ENCODE measurements at regions of chr1 and their contacts with region 1.

Region 1: GRCh38 chr1:155172732-155173477 is at the start of gene KRTCAP2:
- DNase-seq: peak; percentile 97
- ATAC-seq: peak; percentile 64
- H3K4me3 Mint-ChIP-seq: peak within 1 kb of the TSS; percentile 94
- H3K27ac Mint-ChIP-seq: peak within 1 kb of the TSS; percentile 95
- H3K4me1 Mint-ChIP-seq: peaks cover 29% of the 10 kb centered on the region
- H3K27me3 Mint-ChIP-seq: no peaks in the 10 kb centered on the region
- CTCF ChIP-seq: peak; percentile 88
- total RNA-seq, gene KRTCAP2: 104 to 161 TPM (median 147 TPM) in 3 replicates

Region 2: GRCh38 chr1:155050560-155051341 is 122.2 kb before region 1 on chr1 and contains the start of gene ADAM15:
- CTCF ChIA-PET with region 1: interaction called, 29 read pairs
- POLR2A ChIA-PET with region 1: no interaction called
- DNase-seq: peak; percentile 92
- ATAC-seq: peak; percentile 72
- H3K4me3 Mint-ChIP-seq: peak within 1 kb of the TSS; percentile 82
- H3K27ac Mint-ChIP-seq: peak within 1 kb of the TSS; percentile 72; the same call in 1 of the 2 replicates
- H3K4me1 Mint-ChIP-seq: peaks cover 33% of the 10 kb centered on the region
- H3K27me3 Mint-ChIP-seq: peaks cover 20% of the 10 kb centered on the region
- CTCF ChIP-seq: peak; percentile 97
- total RNA-seq, gene ADAM15: 32.1 to 38.4 TPM (median 33.2 TPM) in 3 replicates

Region 3: DNA sequence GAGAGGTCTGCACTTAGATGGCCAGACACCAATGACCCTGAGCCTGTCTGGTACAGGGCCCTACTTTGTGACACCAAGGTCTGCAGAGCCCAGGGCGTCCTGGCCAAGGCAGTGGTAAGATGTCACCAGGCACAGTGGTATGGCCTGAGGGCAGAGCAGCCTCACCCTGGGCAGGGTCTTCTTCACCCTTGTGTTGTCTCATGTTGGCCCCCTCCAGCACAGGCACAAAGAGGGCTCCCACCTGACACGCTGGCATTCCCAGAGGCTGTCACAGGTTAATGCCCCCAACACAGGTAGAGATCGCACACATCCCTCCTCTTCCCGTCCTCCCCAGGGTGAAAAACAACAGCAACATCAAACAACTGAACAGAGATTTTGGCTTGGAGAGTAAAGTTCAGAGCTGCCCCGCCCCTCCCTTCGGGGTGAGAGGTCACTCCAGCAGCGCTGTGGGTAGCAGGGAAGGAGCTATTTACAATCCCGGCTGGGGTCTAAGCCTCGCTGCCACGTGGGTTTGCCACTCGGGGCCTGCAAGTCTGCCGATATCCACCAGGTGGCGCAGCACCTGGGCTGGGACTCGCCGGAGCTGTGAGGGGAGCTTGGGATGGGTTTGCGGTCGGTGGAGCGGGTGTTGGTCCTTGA is 81.7 kb before region 1 on chr1:
- CTCF ChIA-PET with region 1: interaction called, 605 read pairs
- POLR2A ChIA-PET with region 1: interaction called, 8 read pairs
- DNase-seq: peak; percentile 94
- ATAC-seq: peak; percentile 80
- H3K4me3 Mint-ChIP-seq: peak overlapping the region; percentile 32
- H3K27ac Mint-ChIP-seq: no peak overlapping the region
- H3K4me1 Mint-ChIP-seq: peaks cover 30% of the 10 kb centered on the region
- H3K27me3 Mint-ChIP-seq: peaks cover 12% of the 10 kb centered on the region
- CTCF ChIP-seq: peak; percentile 99

Region 4: GRCh38 chr1:155145491-155145890 is 27.4 kb before region 1 on chr1:
- CTCF ChIA-PET with region 1: interaction called, 43 read pairs
- POLR2A ChIA-PET with region 1: interaction called, 6 read pairs
- DNase-seq: no peak
- ATAC-seq: no peak
- H3K4me3 Mint-ChIP-seq: no peak overlapping the region
- H3K27ac Mint-ChIP-seq: no peak overlapping the region
- H3K4me1 Mint-ChIP-seq: peaks cover 6% of the 10 kb centered on the region; the same call in 1 of the 2 replicates
- H3K27me3 Mint-ChIP-seq: peaks cover 36% of the 10 kb centered on the region
- CTCF ChIP-seq: no peak

Region 5: GRCh38 chr1:155208541-155209311 is 35.8 kb after region 1 on chr1 and contains the start of gene MTX1:
- CTCF ChIA-PET with region 1: interaction called, 51 read pairs
- POLR2A ChIA-PET with region 1: interaction called, 3 read pairs
- DNase-seq: peak; percentile 88
- ATAC-seq: peak; percentile 65
- H3K4me3 Mint-ChIP-seq: peak within 1 kb of the TSS; percentile 88
- H3K27ac Mint-ChIP-seq: peak within 1 kb of the TSS; percentile 89
- H3K4me1 Mint-ChIP-seq: peaks cover 19% of the 10 kb centered on the region
- H3K27me3 Mint-ChIP-seq: peaks cover 7% of the 10 kb centered on the region; the same call in 1 of the 2 replicates
- CTCF ChIP-seq: no peak
- total RNA-seq, gene MTX1: 57.5 to 62.8 TPM (median 60.4 TPM) in 3 replicates

Region 6: GRCh38 chr1:155334962-155335361 is 162.1 kb after region 1 on chr1:
- CTCF ChIA-PET with region 1: no interaction called
- POLR2A ChIA-PET with region 1: no interaction called
- DNase-seq: no peak
- ATAC-seq: no peak
- H3K4me3 Mint-ChIP-seq: no peak overlapping the region
- H3K27ac Mint-ChIP-seq: peak overlapping the region; percentile 57; the same call in 1 of the 2 replicates
- H3K4me1 Mint-ChIP-seq: no peaks in the 10 kb centered on the region
- H3K27me3 Mint-ChIP-seq: no peaks in the 10 kb centered on the region
- CTCF ChIP-seq: no peak

Measured in WTC11 (cell line).